Lower leg skin (tissue), 4 donors: ENCODE measurements at regions of chr5 and their contacts with region 1.

Region 1: GRCh38 chr5:6692906-6693305 is 20.3 kb upstream of the TENT4A start:
- DNase-seq: no peak
- H3K4me3 ChIP-seq: no peak overlapping the region
- CTCF ChIP-seq: no peak
- POLR2A ChIP-seq: no peak

Region 2: DNA sequence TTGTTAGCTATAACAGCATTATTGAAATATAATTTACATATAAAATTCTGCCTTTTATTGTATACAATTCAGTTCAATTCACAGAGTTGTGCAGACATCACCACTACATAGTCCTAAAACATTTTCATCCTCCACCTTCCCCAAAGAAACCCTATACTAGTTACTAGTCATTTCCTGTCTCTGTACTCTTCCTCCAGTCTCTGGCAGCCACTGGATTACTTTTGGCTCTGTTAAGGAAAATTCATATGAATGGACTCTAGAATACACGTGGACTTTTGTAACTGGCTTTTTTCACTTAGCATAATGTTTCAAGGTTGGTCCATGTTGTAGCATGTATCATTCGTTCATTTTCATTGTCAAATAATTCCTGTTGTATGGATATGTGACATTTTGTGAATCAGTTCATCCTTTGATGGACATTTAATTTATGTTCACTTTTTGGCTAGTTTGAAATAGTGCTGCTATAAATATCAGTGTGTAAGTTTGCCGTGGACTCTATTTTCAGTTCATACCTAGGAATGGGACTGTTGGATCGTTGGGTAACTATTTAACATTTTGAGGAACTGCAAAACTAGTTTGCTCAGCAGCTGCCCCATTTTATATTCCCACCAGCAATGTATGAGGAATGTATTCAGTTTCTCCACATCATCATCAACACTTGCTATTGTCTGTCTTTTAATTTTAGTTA is 1260.7 kb before region 1 on chr5:
- intact Hi-C with region 1: loop called (anchors 10 kb)
- DNase-seq: no peak
- H3K4me3 ChIP-seq: no peak overlapping the region
- CTCF ChIP-seq: no peak
- POLR2A ChIP-seq: no peak

Region 3: GRCh38 chr5:6792911-6793471 is 100.1 kb after region 1 on chr5:
- intact Hi-C with region 1: no loop called
- DNase-seq: no peak
- H3K4me3 ChIP-seq: no peak overlapping the region
- CTCF ChIP-seq: no peak
- POLR2A ChIP-seq: no peak